ENCODE measurements at regions of chr21 and their contacts with region 1.

Region 1: GRCh38 chr21:45140346-45140940 is 66.1 kb downstream of the ADARB1 start:
- DNase-seq: peak; percentile 82
- ATAC-seq: peak; percentile 93
- H3K4me3 Mint-ChIP-seq: no peak overlapping the region
- H3K27ac Mint-ChIP-seq: no peak overlapping the region
- H3K4me1 Mint-ChIP-seq: peaks cover 10% of the 10 kb centered on the region
- H3K27me3 Mint-ChIP-seq: no peaks in the 10 kb centered on the region

Region 2: DNA sequence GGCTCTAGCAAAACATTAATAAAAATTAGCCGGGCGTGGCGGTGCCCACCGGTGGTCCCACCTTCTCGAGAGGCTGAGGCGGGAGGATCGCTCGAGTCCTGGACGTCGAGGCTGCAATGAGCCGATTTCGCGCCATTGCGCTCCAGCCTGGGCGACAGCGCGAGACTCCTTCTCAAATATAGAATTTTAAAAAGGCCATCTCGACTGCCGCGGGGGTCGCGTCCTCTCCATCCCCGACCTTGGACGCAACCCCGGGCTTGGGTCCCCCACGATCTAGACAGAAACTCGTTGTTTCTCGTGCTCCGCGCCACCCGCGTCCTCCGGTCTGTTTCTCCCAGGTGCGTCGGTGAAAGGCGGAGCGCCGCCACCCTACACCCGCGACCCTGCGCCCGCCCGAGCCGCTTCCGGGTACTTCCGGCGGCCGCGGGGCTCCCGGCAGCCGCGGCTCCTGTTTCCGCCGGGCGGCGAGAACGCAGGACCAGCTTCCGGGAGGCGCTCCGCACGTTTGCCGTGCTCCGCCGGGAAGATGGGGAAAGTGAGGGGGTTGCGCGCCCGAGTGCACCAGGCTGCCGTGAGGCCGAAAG is 200.8 kb before region 1 on chr21 and contains the start of gene SLX9:
- CTCF ChIA-PET with region 1: interaction called, 154 read pairs
- POLR2A ChIA-PET with region 1: no interaction called
- DNase-seq: peak; percentile 81
- ATAC-seq: peak; percentile 92
- H3K4me3 Mint-ChIP-seq: peak within 1 kb of the TSS; percentile 86
- H3K27ac Mint-ChIP-seq: peak within 1 kb of the TSS; percentile 84
- H3K4me1 Mint-ChIP-seq: peaks cover 52% of the 10 kb centered on the region
- H3K27me3 Mint-ChIP-seq: no peaks in the 10 kb centered on the region
- total RNA-seq, gene SLX9: 56.6 to 60.4 TPM

Region 3: GRCh38 chr21:44962403-44962966 is 178.0 kb before region 1 on chr21:
- CTCF ChIA-PET with region 1: interaction called, 60 read pairs
- POLR2A ChIA-PET with region 1: no interaction called
- DNase-seq: no peak
- ATAC-seq: no peak
- H3K4me3 Mint-ChIP-seq: no peak overlapping the region
- H3K27ac Mint-ChIP-seq: no peak overlapping the region
- H3K4me1 Mint-ChIP-seq: peaks cover 33% of the 10 kb centered on the region
- H3K27me3 Mint-ChIP-seq: no peaks in the 10 kb centered on the region

Region 4: GRCh38 chr21:45074818-45075595 is 65.4 kb before region 1 on chr21:
- CTCF ChIA-PET with region 1: interaction called, 35 read pairs
- POLR2A ChIA-PET with region 1: interaction called, 3 read pairs
- DNase-seq: peak; percentile 32
- ATAC-seq: peak; percentile 5
- H3K4me3 Mint-ChIP-seq: peak overlapping the region; percentile 82
- H3K27ac Mint-ChIP-seq: peak overlapping the region; percentile 78
- H3K4me1 Mint-ChIP-seq: peaks cover 50% of the 10 kb centered on the region
- H3K27me3 Mint-ChIP-seq: no peaks in the 10 kb centered on the region

Region 5: DNA sequence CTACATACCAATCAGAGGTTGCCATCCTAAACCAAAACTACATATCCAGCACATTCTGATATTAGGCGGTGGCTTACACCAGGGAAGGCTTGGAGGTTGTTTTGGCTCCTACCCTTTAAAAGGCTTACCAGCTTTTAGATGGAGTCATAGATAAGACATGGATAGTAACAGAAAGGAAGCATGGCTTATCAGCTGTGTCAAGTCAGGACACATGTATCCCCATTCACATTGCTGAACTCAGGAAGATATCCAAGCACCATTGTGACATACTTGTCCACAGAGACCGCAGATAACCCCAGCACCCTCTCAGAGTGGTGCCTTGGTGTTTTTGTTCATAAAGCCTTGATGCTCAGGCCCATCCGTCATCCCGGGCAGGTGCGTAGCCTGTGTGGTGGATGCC is 26.4 kb before region 1 on chr21:
- CTCF ChIA-PET with region 1: interaction called, 61 read pairs
- POLR2A ChIA-PET with region 1: no interaction called
- DNase-seq: no peak
- ATAC-seq: no peak
- H3K4me3 Mint-ChIP-seq: no peak overlapping the region
- H3K27ac Mint-ChIP-seq: no peak overlapping the region
- H3K4me1 Mint-ChIP-seq: peaks cover 62% of the 10 kb centered on the region
- H3K27me3 Mint-ChIP-seq: no peaks in the 10 kb centered on the region

Region 6: DNA sequence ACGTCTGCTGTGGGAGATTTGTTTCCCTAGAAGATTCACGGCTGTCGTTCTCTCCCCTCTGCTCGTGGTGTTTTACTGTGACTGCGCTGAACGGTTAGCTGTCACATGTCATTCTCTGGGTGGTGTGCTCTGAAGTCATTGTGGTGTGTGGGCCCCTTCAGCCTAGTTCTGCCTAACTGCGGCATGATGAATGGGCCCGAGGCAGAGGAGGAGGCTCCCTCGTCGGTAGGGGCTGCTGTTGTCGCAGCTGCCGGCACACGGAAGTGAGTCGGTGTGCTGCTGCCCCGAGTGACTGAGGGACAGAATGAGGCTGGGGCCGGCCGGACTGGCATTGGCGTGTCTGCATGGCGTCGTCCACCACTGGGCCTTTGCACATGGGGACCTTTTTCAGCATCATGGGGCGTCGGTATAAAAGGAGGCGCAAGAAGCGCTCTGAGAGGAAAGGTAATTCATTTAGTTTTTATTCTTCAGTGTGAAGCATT is 11.9 kb after region 1 on chr21:
- CTCF ChIA-PET with region 1: interaction called, 98 read pairs
- POLR2A ChIA-PET with region 1: no interaction called
- DNase-seq: peak; percentile 88
- ATAC-seq: peak; percentile 98
- H3K4me3 Mint-ChIP-seq: peak overlapping the region; percentile 65
- H3K27ac Mint-ChIP-seq: peak overlapping the region; percentile 84
- H3K4me1 Mint-ChIP-seq: peaks cover 47% of the 10 kb centered on the region
- H3K27me3 Mint-ChIP-seq: no peaks in the 10 kb centered on the region

Region 7: GRCh38 chr21:45200581-45201296 is 60.3 kb after region 1 on chr21:
- CTCF ChIA-PET with region 1: no interaction called
- POLR2A ChIA-PET with region 1: no interaction called
- DNase-seq: no peak
- ATAC-seq: no peak
- H3K4me3 Mint-ChIP-seq: no peak overlapping the region
- H3K27ac Mint-ChIP-seq: peak overlapping the region; percentile 61
- H3K4me1 Mint-ChIP-seq: peaks cover 10% of the 10 kb centered on the region
- H3K27me3 Mint-ChIP-seq: no peaks in the 10 kb centered on the region

Region 8: DNA sequence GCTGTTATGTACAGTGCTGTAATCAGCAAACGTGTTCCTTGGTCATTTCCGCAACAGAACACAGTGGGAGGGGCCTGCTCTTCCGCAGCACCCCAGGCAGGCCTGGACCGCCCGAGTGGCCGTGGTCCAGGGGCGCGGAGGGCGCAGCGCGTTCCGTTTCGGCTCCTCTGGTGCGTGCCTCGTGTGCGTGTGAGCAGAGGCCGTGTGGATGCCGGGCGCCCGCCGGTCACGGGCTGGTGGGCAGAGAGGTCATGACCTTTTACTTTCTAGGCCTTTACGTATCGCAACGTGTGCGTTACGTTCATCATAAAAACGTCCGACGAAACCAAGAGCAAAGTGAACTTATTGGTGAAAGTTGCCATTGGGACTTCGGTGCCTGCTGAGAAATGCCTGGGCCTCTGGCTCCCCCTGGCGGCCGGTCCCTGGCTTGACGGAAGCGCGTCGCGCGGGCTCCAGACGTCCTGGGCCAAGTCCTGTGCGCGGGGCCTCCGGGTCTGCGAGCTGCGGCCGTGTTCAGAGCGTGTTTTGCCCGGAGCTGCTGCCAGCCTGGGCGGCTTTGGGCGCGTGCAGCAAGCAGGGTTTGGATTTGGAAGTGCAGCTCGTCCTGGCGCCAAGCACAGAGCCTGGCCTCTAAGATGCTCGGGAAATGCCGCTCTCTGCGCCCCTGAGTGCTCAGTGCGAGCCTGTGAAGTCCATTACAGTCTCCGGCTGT is 298.9 kb after region 1 on chr21:
- CTCF ChIA-PET with region 1: interaction called, 12 read pairs
- POLR2A ChIA-PET with region 1: no interaction called
- DNase-seq: peak; percentile 88
- ATAC-seq: peak; percentile 95
- H3K4me3 Mint-ChIP-seq: peak overlapping the region; percentile 28
- H3K27ac Mint-ChIP-seq: peak overlapping the region; percentile 55
- H3K4me1 Mint-ChIP-seq: peaks cover 9% of the 10 kb centered on the region
- H3K27me3 Mint-ChIP-seq: peaks cover 3% of the 10 kb centered on the region